H1 (cell line): ENCODE measurements at regions of chr11 and their contacts with region 1.

Region 1: DNA sequence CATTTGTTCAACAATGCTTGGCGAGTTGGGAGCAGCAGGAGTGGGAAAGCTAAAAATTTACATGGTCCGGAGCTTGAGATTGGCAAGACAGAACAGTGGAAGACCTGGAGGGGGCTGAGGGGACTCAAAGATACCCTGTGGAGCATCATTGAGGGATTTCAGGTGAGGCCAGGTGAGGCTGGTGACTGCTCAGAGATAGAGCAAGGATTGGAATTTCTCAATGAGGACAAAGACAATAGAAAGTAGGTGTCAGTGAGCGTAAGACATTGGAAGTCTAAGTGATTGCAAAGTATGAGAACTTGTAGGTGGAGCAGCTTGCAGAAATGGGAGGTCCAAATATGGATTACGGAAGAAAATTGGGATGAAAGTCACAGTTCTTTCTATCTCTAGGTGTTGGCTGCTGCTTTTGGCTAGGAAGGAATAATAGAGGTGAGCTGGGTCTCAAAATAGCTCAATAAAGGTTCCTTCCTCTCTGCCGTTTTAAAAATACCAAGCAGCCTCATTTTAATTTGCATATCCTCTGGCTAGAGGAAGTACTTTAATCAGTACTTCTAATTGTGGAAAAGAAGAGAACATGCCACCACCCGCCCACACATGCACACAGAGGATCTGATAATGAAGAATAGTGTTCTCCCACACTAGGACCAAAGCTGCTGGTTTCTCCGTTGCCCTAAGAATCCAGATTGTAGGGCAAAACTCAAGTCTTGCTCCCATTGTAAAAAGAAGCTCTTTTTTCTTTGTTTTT is 41.8 kb upstream of the SORL1-AS1 start:
- DNase-seq: no peak
- H3K4me3 ChIP-seq: no peak overlapping the region
- H3K27ac ChIP-seq: no peak overlapping the region
- H3K4me1 ChIP-seq: peaks cover 0 to 11% (median 6%) of the 10 kb centered on the region in 4 experiments; a peak in 4 of 7 replicates
- H3K27me3 ChIP-seq: no peaks in the 10 kb centered on the region
- CTCF ChIP-seq: no peak
- EP300 ChIP-seq: no peak
- POLR2A ChIP-seq: no peak
- RAD21 ChIP-seq: no peak; a peak in 1 of 4 replicates

Region 2: GRCh38 chr11:121479698-121480238 is 14.8 kb before region 1 on chr11:
- CTCF ChIA-PET with region 1: interaction called, 11 read pairs
- POLR2A ChIA-PET with region 1: interaction called, 6 read pairs
- DNase-seq: no peak
- H3K4me3 ChIP-seq: peak overlapping the region in 1 of 4 experiments; percentile 43; a peak in 2 of 8 replicates
- H3K27ac ChIP-seq: no peak overlapping the region; the same call in 1 of the 2 replicates
- H3K4me1 ChIP-seq: peaks cover 16 to 34% (median 27%) of the 10 kb centered on the region in 4 experiments
- H3K27me3 ChIP-seq: no peaks in the 10 kb centered on the region
- CTCF ChIP-seq: no peak
- EP300 ChIP-seq: no peak
- POLR2A ChIP-seq: no peak
- RAD21 ChIP-seq: 0 out of 4 replicates have a peak, but pooled peaks of 1 of the 2 experiments have one; percentile 15

Region 3: DNA sequence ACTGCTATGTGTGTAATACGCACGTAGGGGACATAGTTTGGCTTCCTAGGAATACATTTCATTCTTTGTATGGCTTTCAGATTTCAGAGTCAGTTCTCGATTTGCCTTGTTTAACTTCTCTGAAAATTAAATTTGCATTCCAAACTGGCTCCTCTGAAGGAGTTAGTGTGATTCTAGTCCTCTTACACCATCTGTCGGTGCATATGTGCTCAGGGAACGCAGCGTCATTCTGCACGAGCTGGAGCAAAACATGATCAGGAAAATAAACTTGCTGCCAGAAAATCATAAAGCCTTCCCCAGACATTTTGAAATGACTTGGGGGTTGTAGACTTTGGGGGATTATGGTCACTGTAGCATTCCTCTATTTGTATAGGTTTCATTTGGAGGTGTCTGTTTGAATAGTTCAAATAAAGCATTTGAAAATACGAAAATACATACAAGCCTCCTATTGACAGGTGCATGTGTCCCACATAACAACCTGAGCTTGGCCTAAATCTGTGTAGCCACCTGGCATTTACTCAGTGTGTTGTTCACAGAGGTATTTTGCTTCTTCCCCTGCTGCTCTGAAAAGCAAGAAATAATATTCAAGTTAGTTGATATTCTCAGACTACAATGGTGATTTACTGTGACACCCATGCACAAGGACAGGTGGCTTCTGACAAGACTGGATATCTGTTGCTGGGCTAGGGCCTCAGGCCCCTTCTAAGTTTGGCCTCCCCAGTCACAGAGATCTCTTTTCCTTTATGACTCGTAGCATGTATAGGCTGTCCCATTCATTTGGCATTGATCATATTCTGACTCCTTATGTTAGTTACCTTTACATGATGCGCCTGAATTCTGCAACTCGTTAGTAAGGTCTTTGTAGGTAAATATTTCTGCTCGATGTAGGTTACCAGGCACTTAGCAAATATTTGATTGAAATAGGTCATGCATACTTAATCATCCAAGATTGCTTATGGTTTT is 39.9 kb after region 1 on chr11:
- CTCF ChIA-PET with region 1: no interaction called
- POLR2A ChIA-PET with region 1: no interaction called
- DNase-seq: no peak
- H3K4me3 ChIP-seq: no peak overlapping the region
- H3K27ac ChIP-seq: no peak overlapping the region
- H3K4me1 ChIP-seq: no peaks in the 10 kb centered on the region
- H3K27me3 ChIP-seq: no peaks in the 10 kb centered on the region
- CTCF ChIP-seq: no peak
- EP300 ChIP-seq: no peak
- POLR2A ChIP-seq: no peak
- RAD21 ChIP-seq: peak; percentile 28 to 45; a peak in 3 of 4 replicates